Gastrocnemius medialis (tissue), 4 donors: ENCODE measurements at regions of chr15 and their contacts with region 1.

Region 1: DNA sequence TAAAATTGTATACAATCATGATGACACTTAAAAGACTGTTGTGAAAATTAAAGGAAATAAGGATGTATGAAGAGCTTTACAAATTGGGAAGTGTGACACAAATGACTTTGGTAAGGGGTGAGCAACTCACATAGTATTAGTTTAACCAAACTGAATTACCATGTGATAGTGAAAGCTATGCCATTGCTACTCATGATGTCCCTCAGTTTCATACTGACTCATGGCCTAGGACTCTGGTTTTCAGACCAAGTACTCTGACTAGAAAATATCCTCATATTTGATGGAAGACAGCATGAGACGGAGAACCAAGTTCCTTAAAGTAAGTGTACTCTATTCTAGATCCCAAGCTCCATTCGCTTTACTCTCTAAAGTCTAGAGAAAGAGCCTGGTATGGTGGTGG is 203.2 kb upstream of the ICE2 start:
- DNase-seq: no peak
- ATAC-seq: peak; percentile 49 to 61
- H3K4me3 ChIP-seq: no peak overlapping the region
- H3K27ac ChIP-seq: peak overlapping the region; percentile 82 to 90 (median 84)
- H3K4me1 ChIP-seq: peaks cover 32 to 48% of the 10 kb centered on the region in 2 donors
- H3K27me3 ChIP-seq: no peaks in the 10 kb centered on the region
- CTCF ChIP-seq: no peak
- POLR2A ChIP-seq: no peak

Region 2: DNA sequence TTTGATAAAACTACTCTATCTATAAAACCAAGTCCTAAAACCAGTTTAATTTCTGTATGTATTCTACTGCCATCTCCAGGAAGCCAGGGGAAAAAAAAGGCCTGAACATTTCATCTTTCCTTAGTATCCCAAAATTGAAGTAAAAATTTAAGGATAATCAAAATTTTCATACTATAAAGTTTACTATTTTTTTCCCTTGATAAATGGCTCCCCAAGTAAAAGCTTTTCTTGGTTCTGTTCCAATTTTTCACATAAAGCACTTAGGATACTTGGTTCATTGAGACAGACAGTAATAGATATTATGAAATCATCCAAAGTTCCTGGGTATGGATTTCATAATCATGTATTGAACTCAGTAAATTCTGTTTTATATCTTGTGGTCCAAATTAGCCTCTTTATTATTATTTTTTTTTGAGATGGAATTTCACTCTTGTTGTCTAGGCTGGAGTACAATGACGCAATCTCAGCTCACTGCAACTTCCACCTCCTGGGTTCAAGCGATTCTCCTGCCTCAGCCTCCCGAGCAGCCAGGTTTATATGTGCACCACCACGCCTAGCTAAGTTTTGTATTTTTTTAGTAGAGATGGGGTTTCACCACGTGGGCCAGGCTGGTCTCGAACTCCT is 237.7 kb before region 1 on chr15:
- in situ Hi-C with region 1: no loop called
- intact Hi-C with region 1: no loop called
- DNase-seq: no peak
- ATAC-seq: peak in 1 of 2 donors; percentile 72
- H3K4me3 ChIP-seq: no peak overlapping the region
- H3K27ac ChIP-seq: peak overlapping the region in 1 of 4 donors; percentile 27
- H3K4me1 ChIP-seq: no peaks in the 10 kb centered on the region
- H3K27me3 ChIP-seq: no peaks in the 10 kb centered on the region
- CTCF ChIP-seq: peak; percentile 36 to 68 (median 58)
- POLR2A ChIP-seq: no peak

Region 3: DNA sequence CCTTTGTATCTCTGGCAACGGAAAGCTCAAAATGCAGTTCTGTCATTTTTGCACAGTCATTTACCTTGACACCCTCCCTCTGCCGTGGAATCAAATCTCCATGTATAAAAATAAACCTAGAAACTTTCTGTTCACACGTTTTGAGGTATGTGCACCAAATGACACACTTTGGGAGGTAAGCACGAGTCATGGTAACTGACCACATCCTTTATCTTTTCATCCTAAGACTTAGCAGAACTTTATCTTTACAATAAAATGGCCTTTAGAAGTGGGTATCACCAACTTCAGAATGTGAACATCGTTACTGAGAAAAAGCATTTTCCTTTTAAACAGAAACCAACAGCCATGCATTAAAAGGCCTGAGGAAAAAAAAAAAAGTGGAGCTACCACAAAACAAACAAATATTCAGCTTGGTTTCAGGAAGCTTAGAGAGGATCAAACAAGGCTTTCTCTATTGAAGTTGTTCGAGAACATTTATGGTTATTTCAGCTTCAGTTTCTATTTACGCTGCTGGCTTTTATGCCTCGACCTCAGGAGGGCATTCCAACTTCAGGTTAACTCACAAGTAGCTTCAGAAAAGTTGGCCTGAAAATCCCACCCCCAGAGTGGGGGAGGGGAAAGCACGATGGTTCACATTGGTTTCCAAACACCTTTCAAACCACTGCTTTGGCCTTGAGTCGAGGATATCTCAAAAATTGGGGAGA is 32.1 kb before region 1 on chr15:
- in situ Hi-C with region 1: no loop called
- intact Hi-C with region 1: no loop called
- DNase-seq: peak in 1 of 2 donors; percentile 22
- ATAC-seq: peak in 1 of 2 donors; percentile 17
- H3K4me3 ChIP-seq: peak overlapping the region in 3 of 4 donors; percentile 3 to 16 (median 8)
- H3K27ac ChIP-seq: peak overlapping the region; percentile 82 to 87 (median 83)
- H3K4me1 ChIP-seq: peaks cover 58 to 59% of the 10 kb centered on the region in 2 donors
- H3K27me3 ChIP-seq: no peaks in the 10 kb centered on the region
- CTCF ChIP-seq: no peak
- POLR2A ChIP-seq: no peak

Region 4: GRCh38 chr15:60729850-60730458 is 47.8 kb after region 1 on chr15:
- in situ Hi-C with region 1: no loop called
- intact Hi-C with region 1: no loop called
- DNase-seq: no peak
- ATAC-seq: no peak
- H3K4me3 ChIP-seq: no peak overlapping the region
- H3K27ac ChIP-seq: no peak overlapping the region
- H3K4me1 ChIP-seq: peaks cover 15% of the 10 kb centered on the region in 2 donors
- H3K27me3 ChIP-seq: no peaks in the 10 kb centered on the region
- CTCF ChIP-seq: no peak
- POLR2A ChIP-seq: no peak

Region 5: GRCh38 chr15:60745469-60746061 is 63.5 kb after region 1 on chr15:
- in situ Hi-C with region 1: loop called in 1 of 4 experiments (anchors 5 kb)
- intact Hi-C with region 1: no loop called
- DNase-seq: peak; percentile 24 to 59
- ATAC-seq: peak; percentile 34 to 47
- H3K4me3 ChIP-seq: no peak overlapping the region
- H3K27ac ChIP-seq: peak overlapping the region in 3 of 4 donors; percentile 30 to 38 (median 34)
- H3K4me1 ChIP-seq: peaks cover 3 to 25% of the 10 kb centered on the region in 2 donors
- H3K27me3 ChIP-seq: no peaks in the 10 kb centered on the region
- CTCF ChIP-seq: no peak
- POLR2A ChIP-seq: no peak